Motor neuron (in vitro differentiated cells): ENCODE measurements at regions of chr2 and their contacts with region 1.

Region 1: DNA sequence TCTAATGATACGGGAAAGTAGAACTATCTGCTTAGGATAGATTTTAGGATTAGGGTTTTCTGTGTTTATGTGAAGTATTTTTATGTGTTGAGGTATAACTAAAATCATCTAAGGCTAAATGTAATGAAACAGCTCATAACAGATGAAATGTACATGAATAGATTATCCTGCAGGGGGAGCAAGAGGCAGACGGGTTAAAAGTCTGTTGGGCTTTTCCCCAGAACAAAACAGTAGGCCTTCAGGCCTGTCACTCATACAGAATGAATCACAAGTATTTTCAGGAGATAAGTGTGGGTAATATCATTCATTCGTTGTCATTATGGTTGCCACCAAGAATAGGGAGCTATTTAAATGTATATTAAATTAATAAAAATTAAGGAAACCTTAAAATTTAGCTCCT is 107.9 kb upstream of the IL1R2 start:
- ATAC-seq: peak in 3 of 8 experiments; percentile 40 to 61 (median 49)
- H3K4me3 ChIP-seq: no peak overlapping the region
- H3K27ac ChIP-seq: no peak overlapping the region
- H3K4me1 ChIP-seq: no peaks in the 10 kb centered on the region

Region 2: GRCh38 chr2:101282980-101283379 is 600.9 kb before region 1 on chr2:
- in situ Hi-C with region 1: no loop called
- ATAC-seq: no peak
- H3K4me3 ChIP-seq: no peak overlapping the region
- H3K27ac ChIP-seq: no peak overlapping the region
- H3K4me1 ChIP-seq: no peaks in the 10 kb centered on the region

Region 3: GRCh38 chr2:101983928-101984327 is 100.1 kb after region 1 on chr2:
- in situ Hi-C with region 1: loop called in 1 of 9 experiments (anchors 10 kb)
- ATAC-seq: peak; percentile 8 to 59 (median 34)
- H3K4me3 ChIP-seq: no peak overlapping the region
- H3K27ac ChIP-seq: no peak overlapping the region
- H3K4me1 ChIP-seq: peaks cover 4 to 8% of the 10 kb centered on the region in 2 donors

Region 4: DNA sequence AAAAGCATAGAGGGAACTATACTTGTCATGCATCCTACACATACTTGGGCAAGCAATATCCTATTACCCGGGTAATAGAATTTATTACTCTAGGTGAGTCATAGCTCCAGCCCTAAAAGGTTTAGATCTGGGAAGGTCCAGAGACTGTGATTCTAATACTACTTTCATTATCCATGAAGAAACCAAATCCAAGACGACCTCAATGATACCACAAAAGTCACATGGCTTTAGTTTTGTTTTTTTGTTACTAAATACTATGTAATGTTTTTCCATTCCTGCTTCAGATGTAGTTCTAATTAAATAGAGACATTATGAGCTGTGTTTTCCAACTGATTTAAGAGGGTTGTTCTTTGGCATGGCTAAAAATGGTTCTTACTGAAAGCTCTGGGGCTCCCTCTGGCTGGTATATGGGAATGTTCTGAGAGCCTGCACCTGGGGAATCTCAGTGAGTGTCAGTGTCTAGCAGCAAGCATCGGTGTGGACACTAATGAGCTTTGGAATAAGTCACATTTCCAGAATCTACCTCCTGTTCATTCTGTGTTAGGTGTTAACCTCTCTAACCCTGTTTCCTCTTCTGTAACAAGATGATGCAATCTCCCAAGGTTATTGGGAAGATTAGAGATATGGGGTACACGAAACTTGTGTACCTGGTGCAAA is 282.5 kb after region 1 on chr2:
- in situ Hi-C with region 1: loop called in 1 of 9 experiments (anchors 25 kb)
- ATAC-seq: peak; percentile 39 to 94 (median 63)
- H3K4me3 ChIP-seq: no peak overlapping the region
- H3K27ac ChIP-seq: no peak overlapping the region
- H3K4me1 ChIP-seq: no peaks in the 10 kb centered on the region

Region 5: GRCh38 chr2:102442967-102443828 is 559.3 kb after region 1 on chr2:
- in situ Hi-C with region 1: loop called in 1 of 9 experiments (anchors 25 kb)
- ATAC-seq: peak in 3 of 8 experiments; percentile 61 to 88 (median 75)
- H3K4me3 ChIP-seq: no peak overlapping the region
- H3K27ac ChIP-seq: no peak overlapping the region
- H3K4me1 ChIP-seq: no peaks in the 10 kb centered on the region